OCI-LY7 (cell line): ENCODE measurements at regions of chr6 and their contacts with region 1.

Region 1: DNA sequence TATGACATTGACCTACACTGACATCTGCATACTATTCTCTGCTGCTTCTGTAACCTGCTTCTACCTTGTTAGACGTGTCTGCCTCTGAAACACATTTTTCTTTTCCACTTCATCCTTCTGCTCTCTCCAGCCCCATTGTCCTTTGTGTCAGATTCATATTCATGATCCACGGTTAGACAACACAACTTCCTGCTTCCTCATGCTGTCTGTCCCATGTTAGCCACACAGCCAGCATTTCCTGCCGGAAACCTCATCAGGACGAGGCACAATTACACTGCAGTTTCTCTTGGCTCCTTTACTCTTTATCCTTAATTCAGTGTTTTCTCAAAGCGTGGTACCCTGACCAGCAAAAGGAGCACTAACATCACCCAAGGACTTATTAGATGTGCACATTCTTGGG is 150.2 kb downstream of the TBC1D7 start:
- DNase-seq: no peak
- H3K4me3 ChIP-seq: no peak overlapping the region
- H3K27ac ChIP-seq: no peak overlapping the region
- H3K4me1 ChIP-seq: no peaks in the 10 kb centered on the region
- CTCF ChIP-seq: no peak

Region 2: GRCh38 chr6:13203145-13203544 is 25.0 kb after region 1 on chr6:
- CTCF ChIA-PET with region 1: no interaction called
- POLR2A ChIA-PET with region 1: interaction called, 10 read pairs
- intact Hi-C with region 1: no loop called
- DNase-seq: no peak
- H3K4me3 ChIP-seq: no peak overlapping the region
- H3K27ac ChIP-seq: no peak overlapping the region
- H3K4me1 ChIP-seq: no peaks in the 10 kb centered on the region
- CTCF ChIP-seq: no peak